Activated naive CD4-positive, alpha-beta T cell treated with anti-CD3 and anti-CD28 coated beads for 36 hours (primary cell): ENCODE measurements at regions of chr13 and their contacts with region 1.

Region 1: GRCh38 chr13:113145911-113146598 is 12.4 kb upstream of the PROZ start:
- DNase-seq: no peak
- H3K4me3 Mint-ChIP-seq: no peak overlapping the region
- H3K27ac Mint-ChIP-seq: no peak overlapping the region
- H3K4me1 Mint-ChIP-seq: peaks cover 9% of the 10 kb centered on the region
- H3K27me3 Mint-ChIP-seq: no peaks in the 10 kb centered on the region

Region 2: GRCh38 chr13:113162771-113163685 is 17.0 kb after region 1 on chr13:
- CTCF ChIA-PET with region 1: no interaction called
- intact Hi-C with region 1: no loop called
- DNase-seq: peak; percentile 12
- H3K4me3 Mint-ChIP-seq: no peak overlapping the region
- H3K27ac Mint-ChIP-seq: peak overlapping the region; percentile 37
- H3K4me1 Mint-ChIP-seq: peaks cover 14% of the 10 kb centered on the region
- H3K27me3 Mint-ChIP-seq: no peaks in the 10 kb centered on the region

Region 3: GRCh38 chr13:113176280-113176679 is 30.2 kb after region 1 on chr13:
- CTCF ChIA-PET with region 1: no interaction called
- intact Hi-C with region 1: no loop called
- DNase-seq: peak; percentile 45
- H3K4me3 Mint-ChIP-seq: no peak overlapping the region
- H3K27ac Mint-ChIP-seq: peak overlapping the region; percentile 82
- H3K4me1 Mint-ChIP-seq: peaks cover 17% of the 10 kb centered on the region
- H3K27me3 Mint-ChIP-seq: no peaks in the 10 kb centered on the region

Region 4: GRCh38 chr13:113187263-113187669 is 41.2 kb after region 1 on chr13:
- CTCF ChIA-PET with region 1: no interaction called
- intact Hi-C with region 1: loop called (anchors 1 kb)
- DNase-seq: peak; percentile 75
- H3K4me3 Mint-ChIP-seq: no peak overlapping the region
- H3K27ac Mint-ChIP-seq: peak overlapping the region; percentile 11
- H3K4me1 Mint-ChIP-seq: peaks cover 31% of the 10 kb centered on the region
- H3K27me3 Mint-ChIP-seq: no peaks in the 10 kb centered on the region